ENCODE measurements at regions of chrX and their contacts with region 1.

Region 1: DNA sequence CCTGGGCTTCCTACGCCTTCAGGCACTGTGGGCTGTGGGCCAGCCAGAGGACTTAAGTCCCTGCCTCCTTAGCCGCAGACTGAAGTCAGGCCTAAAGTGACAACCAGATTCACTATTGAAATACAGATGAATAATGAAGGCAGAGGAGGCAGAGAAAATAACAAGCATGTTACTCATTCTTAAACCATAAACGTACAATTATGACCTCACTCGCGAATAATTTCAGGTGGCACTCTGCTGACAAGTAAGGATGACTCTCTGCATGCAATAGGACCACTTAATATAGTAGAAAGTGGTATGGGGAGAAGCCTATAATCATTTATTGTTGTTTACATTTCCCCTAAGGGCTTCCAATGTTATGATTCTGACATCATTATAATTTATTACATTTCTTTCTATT is 409.2 kb upstream of the FGF13 start:
- DNase-seq: no peak
- H3K4me3 ChIP-seq: no peak overlapping the region
- CTCF ChIP-seq: no peak
- POLR2A ChIP-seq: no peak

Region 2: DNA sequence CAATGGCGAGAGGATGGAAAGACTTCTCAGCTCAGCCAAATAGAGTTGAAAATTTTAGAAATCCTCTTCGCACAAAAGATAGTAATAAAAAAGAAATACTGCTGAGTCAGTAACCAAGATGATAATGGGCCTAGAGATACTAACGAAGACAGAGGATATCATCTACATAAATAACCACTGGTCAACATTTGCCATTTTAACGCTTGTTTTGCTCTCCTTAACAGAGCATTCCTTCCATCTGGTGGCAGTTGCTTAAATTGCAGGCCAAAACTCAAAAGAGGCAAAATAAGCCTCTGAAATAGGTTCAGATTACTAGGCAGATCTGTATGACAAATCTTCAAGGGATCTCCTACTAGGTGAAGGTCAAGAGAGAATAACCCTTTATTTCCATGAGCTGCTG is 638.9 kb after region 1 on chrX:
- intact Hi-C with region 1: loop called (anchors 5 kb)
- DNase-seq: no peak
- H3K4me3 ChIP-seq: no peak overlapping the region
- CTCF ChIP-seq: no peak
- POLR2A ChIP-seq: no peak